PC-3 (cell line): ENCODE measurements at regions of chr2 and their contacts with region 1.

Region 1: DNA sequence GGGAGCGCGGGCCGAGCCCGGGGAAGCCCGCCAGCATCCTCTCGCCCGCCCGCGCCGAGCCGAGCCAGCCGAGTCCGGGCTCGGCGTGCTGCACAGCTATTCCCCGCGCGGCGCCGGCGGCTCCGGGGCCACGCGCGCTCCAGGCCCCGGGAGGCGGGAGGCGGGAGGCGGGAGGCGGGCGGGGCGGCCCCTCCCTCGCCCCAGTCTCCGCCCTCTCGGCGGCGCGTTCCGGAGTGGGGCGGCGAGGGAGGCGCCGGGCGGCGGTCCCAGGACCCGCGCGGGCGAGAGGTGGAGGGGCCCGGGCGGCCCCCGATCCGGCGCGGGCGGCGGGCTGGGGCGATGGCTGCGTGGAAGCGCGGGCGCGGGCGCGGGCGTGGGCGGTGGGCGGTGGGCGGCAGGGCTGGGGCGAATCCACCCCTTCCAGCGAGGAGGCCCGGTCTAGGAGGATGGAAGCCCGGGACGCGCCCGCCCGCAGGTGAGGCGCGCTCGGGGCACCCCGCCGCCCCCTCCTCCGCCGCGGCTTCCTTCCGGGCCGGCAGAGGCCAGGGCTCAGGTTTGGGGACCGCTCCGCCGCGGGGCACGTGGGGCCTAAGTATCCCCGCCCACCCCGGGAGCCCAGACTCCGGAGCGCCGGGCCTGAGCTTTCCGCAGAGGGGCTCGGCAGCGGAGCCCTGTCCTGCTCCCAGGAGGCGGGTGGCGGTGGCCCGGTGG is at the start of gene ADCY3:
- DNase-seq: peak; percentile 46
- ATAC-seq: peak; percentile 64
- H3K4me3 ChIP-seq: peak within 1 kb of the TSS; percentile 79
- H3K27ac ChIP-seq: no peak within 1 kb of the TSS
- H3K4me1 ChIP-seq: peaks cover 20% of the 10 kb centered on the region
- H3K27me3 ChIP-seq: no peaks in the 10 kb centered on the region
- CTCF ChIP-seq: no peak
- total RNA-seq, gene ADCY3: 52.0 and 70.3 TPM in 2 replicates

Region 2: DNA sequence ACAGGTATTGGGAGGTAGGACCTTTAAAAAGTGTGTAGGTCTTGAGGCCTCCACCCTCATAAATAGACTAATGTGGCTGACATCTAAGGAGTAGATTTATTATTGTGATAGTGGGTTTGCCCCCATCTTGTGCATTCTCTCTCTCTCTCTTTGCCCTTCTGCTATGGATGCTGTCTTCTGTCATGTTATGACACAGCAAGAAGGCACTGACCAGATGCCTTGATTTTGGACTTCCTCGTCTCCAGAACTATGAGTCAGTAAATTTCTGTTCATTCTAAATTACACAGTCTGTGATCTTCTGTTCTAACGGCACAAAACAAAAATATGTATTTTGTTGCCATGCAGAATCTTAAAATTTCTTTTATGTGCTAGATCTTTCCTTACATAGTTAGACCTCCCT is 1060.3 kb before region 1 on chr2:
- CTCF ChIA-PET with region 1: no interaction called
- POLR2A ChIA-PET with region 1: interaction called, 15 read pairs
- intact Hi-C with region 1: no loop called
- DNase-seq: no peak
- ATAC-seq: no peak
- H3K4me3 ChIP-seq: no peak overlapping the region
- H3K27ac ChIP-seq: no peak overlapping the region
- H3K4me1 ChIP-seq: no peaks in the 10 kb centered on the region
- H3K27me3 ChIP-seq: no peaks in the 10 kb centered on the region
- CTCF ChIP-seq: no peak

Region 3: DNA sequence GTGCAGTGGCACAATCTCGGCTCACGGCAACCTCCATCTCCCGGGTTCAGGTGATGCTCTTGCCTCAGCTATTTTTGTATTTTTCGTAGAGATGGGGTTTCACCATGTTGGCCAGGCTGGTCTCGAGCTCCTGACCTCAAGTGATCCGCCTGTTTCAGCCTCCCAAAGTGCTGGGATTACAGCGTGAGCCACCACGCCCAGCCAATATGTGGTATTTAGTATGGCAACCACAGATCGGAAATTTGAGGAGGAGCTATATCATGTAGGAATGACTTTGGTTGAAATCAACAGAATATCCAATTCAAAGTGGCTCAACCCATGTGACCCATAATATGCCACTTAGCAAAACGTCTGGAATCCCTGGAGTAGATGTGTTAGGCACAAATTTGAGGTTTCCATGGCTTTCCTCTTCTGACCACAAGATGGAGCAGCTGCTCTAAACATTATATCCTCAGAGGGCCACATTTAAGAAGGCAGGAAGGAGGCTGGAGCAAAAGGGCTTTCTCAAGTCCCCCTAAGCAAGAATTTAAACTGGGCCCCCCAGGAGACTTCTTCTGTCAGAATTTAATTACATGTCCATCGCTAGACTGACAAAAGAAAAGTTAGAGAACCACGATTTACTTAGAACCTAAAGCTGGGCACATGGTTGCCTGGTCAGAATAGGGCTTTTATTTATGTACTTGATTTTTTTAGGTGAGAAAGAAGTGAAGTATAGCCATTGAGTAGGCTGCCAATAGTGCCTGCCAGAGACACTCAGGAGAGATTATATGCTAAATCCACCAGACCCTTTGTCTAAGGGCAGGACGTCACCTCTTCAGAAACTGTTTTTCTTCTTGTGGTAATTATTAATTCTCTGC is 510.3 kb before region 1 on chr2:
- CTCF ChIA-PET with region 1: no interaction called
- POLR2A ChIA-PET with region 1: no interaction called
- intact Hi-C with region 1: loop called (anchors 10 kb)
- DNase-seq: peak; percentile 82
- ATAC-seq: peak; percentile 96
- H3K4me3 ChIP-seq: no peak overlapping the region
- H3K27ac ChIP-seq: no peak overlapping the region
- H3K4me1 ChIP-seq: no peaks in the 10 kb centered on the region
- H3K27me3 ChIP-seq: no peaks in the 10 kb centered on the region
- CTCF ChIP-seq: peak; percentile 94

Region 4: GRCh38 chr2:25078171-25079049 is 158.2 kb after region 1 on chr2:
- CTCF ChIA-PET with region 1: no interaction called
- POLR2A ChIA-PET with region 1: no interaction called
- intact Hi-C with region 1: loop called (anchors 1 kb)
- DNase-seq: peak; percentile 93
- ATAC-seq: peak; percentile 95
- H3K4me3 ChIP-seq: peak overlapping the region; percentile 46
- H3K27ac ChIP-seq: peak overlapping the region; percentile 62
- H3K4me1 ChIP-seq: peaks cover 16% of the 10 kb centered on the region
- H3K27me3 ChIP-seq: no peaks in the 10 kb centered on the region
- CTCF ChIP-seq: no peak

Region 5: DNA sequence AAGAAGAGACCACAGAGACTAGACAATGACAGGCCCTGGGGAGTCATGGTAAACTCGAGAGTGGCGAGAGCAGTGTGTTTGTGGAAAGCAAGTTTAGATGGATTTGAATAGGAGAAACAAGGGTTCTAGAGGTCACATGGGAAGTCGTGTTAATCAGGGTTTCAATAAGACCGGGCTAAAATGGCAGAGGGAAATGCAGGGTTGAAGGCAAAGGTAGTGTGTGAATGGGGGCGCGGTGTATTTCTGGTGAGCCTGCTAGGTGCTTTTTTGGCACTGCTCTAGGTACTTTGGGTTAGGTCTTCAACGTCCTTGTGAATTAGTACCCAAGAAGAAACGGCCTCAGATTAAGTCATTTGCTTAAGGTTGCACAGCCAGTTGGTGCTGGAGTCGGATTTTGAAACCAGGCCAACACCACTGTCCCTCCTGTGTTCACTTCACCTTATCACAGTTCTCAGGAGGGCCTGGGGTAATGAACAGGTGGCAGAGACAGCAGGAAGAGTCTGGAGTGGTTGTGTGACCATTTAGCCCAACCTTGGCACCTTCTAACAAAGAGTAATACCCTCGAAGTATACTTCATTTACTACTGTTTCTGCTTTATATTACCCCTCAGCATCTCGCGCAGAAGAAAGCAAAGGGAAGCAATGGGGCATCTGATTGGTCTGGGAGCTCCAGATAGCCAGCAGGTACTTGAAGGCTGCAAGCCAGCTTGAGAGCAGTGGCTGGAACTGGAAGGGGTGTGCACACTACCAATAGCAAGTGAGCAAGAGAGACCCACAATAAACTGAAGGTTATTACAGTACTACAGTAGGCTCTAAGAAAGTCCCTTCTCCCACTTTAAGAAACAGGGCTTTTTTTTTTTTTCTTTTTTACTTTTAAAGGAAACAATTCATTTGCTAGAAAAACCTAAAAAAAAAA is 1219.3 kb after region 1 on chr2:
- CTCF ChIA-PET with region 1: no interaction called
- POLR2A ChIA-PET with region 1: no interaction called
- intact Hi-C with region 1: no loop called
- DNase-seq: peak; percentile 29
- ATAC-seq: peak; percentile 12; the same call in 1 of the 2 replicates
- H3K4me3 ChIP-seq: no peak overlapping the region
- H3K27ac ChIP-seq: no peak overlapping the region
- H3K4me1 ChIP-seq: peaks cover 11% of the 10 kb centered on the region
- H3K27me3 ChIP-seq: no peaks in the 10 kb centered on the region
- CTCF ChIP-seq: no peak